ENCODE measurements at regions of chr9 and their contacts with region 1.

Region 1: DNA sequence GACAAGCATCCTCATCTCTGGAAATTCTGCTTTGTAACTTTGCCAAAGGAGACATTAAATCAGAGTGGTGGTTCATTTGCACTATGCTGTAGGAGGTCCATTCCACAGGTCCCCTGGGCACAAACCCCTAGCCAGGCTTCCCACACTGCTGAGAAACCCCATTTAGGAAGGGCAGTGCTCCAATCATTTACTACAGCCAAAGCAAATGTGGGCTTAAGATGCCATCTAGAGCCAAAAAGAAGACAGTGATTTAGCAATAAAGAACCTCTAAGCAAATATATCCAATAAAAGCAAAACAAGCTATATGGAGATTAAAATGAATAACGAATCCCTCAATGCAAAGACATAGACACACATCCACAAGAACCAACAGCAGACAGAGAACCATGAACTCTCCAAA is 129.0 kb upstream of the ALDH1B1 start:
- DNase-seq: no peak
- ATAC-seq: no peak
- H3K4me3 ChIP-seq: no peak overlapping the region
- H3K27ac ChIP-seq: no peak overlapping the region
- H3K4me1 ChIP-seq: no peaks in the 10 kb centered on the region
- H3K27me3 ChIP-seq: no peaks in the 10 kb centered on the region
- CTCF ChIP-seq: peak in 3 of 9 donors; percentile 11 to 27 (median 26)

Region 2: GRCh38 chr9:38088006-38088925 is 175.3 kb before region 1 on chr9:
- intact Hi-C with region 1: no loop called
- DNase-seq: peak; percentile 79 to 83
- ATAC-seq: peak; percentile 62 to 89 (median 85)
- H3K4me3 ChIP-seq: no peak overlapping the region
- H3K27ac ChIP-seq: no peak overlapping the region
- H3K4me1 ChIP-seq: peaks cover 0 to 27% (median 4%) of the 10 kb centered on the region in 9 donors
- H3K27me3 ChIP-seq: no peaks in the 10 kb centered on the region
- CTCF ChIP-seq: peak; percentile 93 to 99 (median 97)

Region 3: GRCh38 chr9:38160613-38161215 is 102.8 kb before region 1 on chr9:
- intact Hi-C with region 1: loop called in 1 of 10 experiments (anchors 10 kb)
- DNase-seq: peak; percentile 48 to 62
- ATAC-seq: peak in 6 of 8 donors; percentile 42 to 70 (median 62)
- H3K4me3 ChIP-seq: no peak overlapping the region
- H3K27ac ChIP-seq: no peak overlapping the region
- H3K4me1 ChIP-seq: no peaks in the 10 kb centered on the region
- H3K27me3 ChIP-seq: no peaks in the 10 kb centered on the region
- CTCF ChIP-seq: peak; percentile 78 to 88 (median 84)

Region 4: GRCh38 chr9:38214432-38214831 is 49.1 kb before region 1 on chr9:
- intact Hi-C with region 1: loop called in 2 of 10 experiments (anchors 5 to 10 kb)
- DNase-seq: no peak
- ATAC-seq: no peak
- H3K4me3 ChIP-seq: no peak overlapping the region
- H3K27ac ChIP-seq: no peak overlapping the region
- H3K4me1 ChIP-seq: no peaks in the 10 kb centered on the region
- H3K27me3 ChIP-seq: peaks cover 0 to 20% (median 0%) of the 10 kb centered on the region in 7 donors
- CTCF ChIP-seq: no peak

Measured in heart right ventricle (tissue), 16 donors.